ENCODE measurements at regions of chr3 and their contacts with region 1.

Region 1: DNA sequence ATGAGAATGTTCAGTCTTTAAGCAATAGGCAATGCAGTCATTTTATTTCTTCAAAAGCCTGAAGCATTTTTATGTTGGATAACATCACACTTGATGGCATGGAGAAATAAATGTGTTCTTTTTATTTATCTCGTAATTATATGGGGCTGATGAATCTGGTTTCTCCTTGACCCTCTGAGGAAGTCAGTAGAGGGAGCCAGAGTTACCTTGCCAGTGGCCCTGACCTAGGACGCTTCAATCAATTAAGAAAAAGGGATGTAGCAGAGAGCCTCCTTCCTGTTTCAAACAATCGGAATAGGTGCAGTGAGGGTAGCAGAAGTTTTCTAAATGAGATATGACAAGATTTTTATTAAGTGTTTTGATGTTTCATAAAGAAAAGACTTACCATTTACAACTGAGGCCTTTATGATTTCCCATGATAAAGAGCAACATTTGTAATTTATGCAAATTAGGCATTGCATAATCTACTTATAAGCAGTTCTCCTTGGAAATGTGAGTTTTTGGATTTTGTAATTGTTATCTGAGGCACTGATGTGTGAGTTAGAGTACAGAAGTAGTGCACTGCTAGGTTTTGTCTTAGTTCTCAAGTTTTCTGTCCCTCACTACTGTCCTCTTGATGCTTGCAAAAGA is 129.1 kb downstream of the RAP2B start:
- DNase-seq: peak; percentile 44
- ATAC-seq: peak; percentile 98
- H3K4me3 ChIP-seq: no peak overlapping the region
- H3K27ac ChIP-seq: no peak overlapping the region
- H3K4me1 ChIP-seq: peaks cover 0 to 13% of the 10 kb centered on the region in 2 experiments; a peak in 2 of 4 replicates
- H3K27me3 ChIP-seq: no peaks in the 10 kb centered on the region
- CTCF ChIP-seq: peak; percentile 55 to 75 (median 57); a peak in 5 of 6 replicates
- POLR2A ChIP-seq: no peak
- RAD21 ChIP-seq: peak; percentile 71

Region 2: DNA sequence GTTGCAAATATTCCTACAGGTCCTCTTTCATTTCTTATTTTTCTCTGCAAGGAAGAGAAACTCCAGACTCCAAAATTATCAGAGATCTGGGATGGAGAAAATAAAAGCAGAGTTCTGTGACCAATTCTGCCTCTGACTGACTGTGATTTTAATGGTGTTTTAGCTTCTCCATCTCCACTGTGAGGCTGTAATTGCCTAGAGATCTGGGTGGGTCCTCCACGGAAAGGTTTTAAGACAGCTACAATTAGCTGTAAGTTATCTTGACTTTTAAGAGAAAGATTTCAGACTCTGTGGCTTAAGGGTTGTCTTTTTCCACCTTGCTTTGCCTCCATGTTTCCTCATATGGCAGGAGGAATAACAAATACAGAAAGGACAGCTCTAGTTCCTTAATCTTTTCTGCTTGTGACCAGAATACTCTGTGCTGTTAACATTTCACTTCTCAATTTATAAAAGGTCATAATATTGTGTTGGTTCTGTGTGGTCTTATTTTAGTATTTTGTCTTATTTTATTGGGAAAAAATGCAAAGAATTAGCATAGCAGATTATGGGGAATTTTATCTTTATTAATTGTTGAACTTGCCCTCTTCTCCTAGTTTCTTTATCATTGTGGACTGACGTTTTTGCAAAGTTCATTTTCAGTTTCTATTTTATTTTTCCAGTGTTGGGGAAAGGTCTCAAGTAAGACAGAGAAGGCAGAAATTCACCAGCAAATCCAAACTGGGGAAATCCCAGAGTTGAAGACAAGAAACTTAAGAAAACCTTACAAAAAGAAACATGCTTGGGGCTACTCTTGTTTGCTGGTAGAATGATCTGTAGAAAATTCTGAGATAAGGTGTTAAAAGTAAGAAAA is 28.8 kb after region 1 on chr3:
- CTCF ChIA-PET with region 1: no interaction called
- POLR2A ChIA-PET with region 1: no interaction called
- RAD21 ChIA-PET with region 1: no interaction called
- intact Hi-C with region 1: no loop called
- DNase-seq: no peak
- ATAC-seq: no peak
- H3K4me3 ChIP-seq: no peak overlapping the region
- H3K27ac ChIP-seq: no peak overlapping the region
- H3K4me1 ChIP-seq: no peaks in the 10 kb centered on the region
- H3K27me3 ChIP-seq: no peaks in the 10 kb centered on the region
- CTCF ChIP-seq: no peak
- POLR2A ChIP-seq: no peak
- RAD21 ChIP-seq: no peak

Region 3: DNA sequence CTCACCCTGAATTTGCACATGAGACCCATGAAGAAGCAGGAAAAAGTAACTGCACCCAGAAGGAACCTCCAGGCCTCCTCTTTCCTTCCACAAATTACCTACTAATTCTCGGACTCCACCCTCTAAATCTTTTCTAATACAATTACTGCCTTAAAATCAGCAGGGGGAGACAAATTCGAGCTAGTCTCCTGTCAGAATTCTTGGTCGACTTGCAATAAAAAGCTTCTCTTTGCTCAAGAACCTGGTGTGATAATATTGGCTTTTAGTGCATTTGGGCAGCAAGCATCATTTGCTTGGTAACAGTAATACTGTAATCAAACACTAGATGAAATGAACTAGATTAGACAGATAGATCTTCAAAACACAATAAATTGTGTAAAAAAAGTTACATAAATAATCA is 152.8 kb after region 1 on chr3:
- CTCF ChIA-PET with region 1: no interaction called
- POLR2A ChIA-PET with region 1: no interaction called
- RAD21 ChIA-PET with region 1: no interaction called
- intact Hi-C with region 1: loop called (anchors 10 kb)
- DNase-seq: peak; percentile 10
- ATAC-seq: no peak
- H3K4me3 ChIP-seq: no peak overlapping the region
- H3K27ac ChIP-seq: no peak overlapping the region
- H3K4me1 ChIP-seq: no peaks in the 10 kb centered on the region
- H3K27me3 ChIP-seq: no peaks in the 10 kb centered on the region
- CTCF ChIP-seq: peak; percentile 18 to 48 (median 27); a peak in 4 of 6 replicates
- POLR2A ChIP-seq: no peak
- RAD21 ChIP-seq: peak; percentile 54; the same call in 1 of the 2 replicates

Region 4: DNA sequence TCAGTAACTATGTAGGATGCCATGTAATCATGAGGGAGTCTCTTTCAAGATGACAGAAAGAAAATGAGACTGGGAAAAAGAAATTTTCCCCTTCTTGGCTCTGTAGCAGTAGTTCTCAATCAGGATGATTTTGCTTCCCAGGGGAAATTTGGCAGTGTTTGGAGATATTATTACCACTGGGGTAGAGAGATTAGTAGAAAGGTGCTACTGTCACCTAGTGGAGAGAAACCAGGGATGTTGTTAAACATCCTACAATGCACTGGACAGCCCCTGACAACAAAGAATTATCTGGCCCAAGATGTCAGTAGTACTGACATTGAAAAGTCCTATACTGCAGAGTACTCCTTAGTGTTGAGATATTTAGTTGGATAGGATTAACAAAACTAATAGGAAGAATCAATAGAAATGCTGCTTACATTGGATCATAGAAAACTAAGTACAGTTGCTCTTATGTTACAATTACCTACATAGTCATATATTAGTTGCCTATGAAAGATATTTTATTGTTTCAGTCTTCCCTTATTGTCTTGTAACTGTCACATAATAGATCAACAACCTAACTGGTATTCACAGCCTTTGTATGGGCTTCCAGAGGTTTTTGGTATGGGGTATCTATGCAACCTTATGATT is 304.1 kb after region 1 on chr3:
- CTCF ChIA-PET with region 1: no interaction called
- POLR2A ChIA-PET with region 1: no interaction called
- RAD21 ChIA-PET with region 1: no interaction called
- intact Hi-C with region 1: loop called (anchors 2 kb)
- DNase-seq: peak; percentile 24
- ATAC-seq: peak; percentile 88
- H3K4me3 ChIP-seq: no peak overlapping the region
- H3K27ac ChIP-seq: no peak overlapping the region
- H3K4me1 ChIP-seq: peaks cover 0 to 9% of the 10 kb centered on the region in 2 experiments; a peak in 2 of 4 replicates
- H3K27me3 ChIP-seq: no peaks in the 10 kb centered on the region
- CTCF ChIP-seq: peak; percentile 79 to 85 (median 85)
- POLR2A ChIP-seq: no peak
- RAD21 ChIP-seq: peak; percentile 86

Region 5: GRCh38 chr3:153768561-153769469 is 477.6 kb after region 1 on chr3:
- CTCF ChIA-PET with region 1: no interaction called
- POLR2A ChIA-PET with region 1: no interaction called
- RAD21 ChIA-PET with region 1: no interaction called
- intact Hi-C with region 1: loop called (anchors 5 kb)
- DNase-seq: peak; percentile 47
- ATAC-seq: peak; percentile 97
- H3K4me3 ChIP-seq: no peak overlapping the region
- H3K27ac ChIP-seq: no peak overlapping the region
- H3K4me1 ChIP-seq: no peaks in the 10 kb centered on the region
- H3K27me3 ChIP-seq: no peaks in the 10 kb centered on the region
- CTCF ChIP-seq: peak; percentile 46 to 84 (median 79); a peak in 5 of 6 replicates
- POLR2A ChIP-seq: no peak
- RAD21 ChIP-seq: peak; percentile 84

Measured in HCT116 (cell line).